Testis (tissue), 5 donors: ENCODE measurements at regions of chr3 and their contacts with region 1.

Region 1: GRCh38 chr3:17841190-17841828 is 98.9 kb upstream of the TBC1D5 start:
- DNase-seq: peak; percentile 82
- H3K4me3 ChIP-seq: no peak overlapping the region
- H3K27ac ChIP-seq: no peak overlapping the region
- H3K4me1 ChIP-seq: no peaks in the 10 kb centered on the region
- H3K27me3 ChIP-seq: no peaks in the 10 kb centered on the region
- CTCF ChIP-seq: peak; percentile 65 to 87 (median 75)
- POLR2A ChIP-seq: no peak

Region 2: DNA sequence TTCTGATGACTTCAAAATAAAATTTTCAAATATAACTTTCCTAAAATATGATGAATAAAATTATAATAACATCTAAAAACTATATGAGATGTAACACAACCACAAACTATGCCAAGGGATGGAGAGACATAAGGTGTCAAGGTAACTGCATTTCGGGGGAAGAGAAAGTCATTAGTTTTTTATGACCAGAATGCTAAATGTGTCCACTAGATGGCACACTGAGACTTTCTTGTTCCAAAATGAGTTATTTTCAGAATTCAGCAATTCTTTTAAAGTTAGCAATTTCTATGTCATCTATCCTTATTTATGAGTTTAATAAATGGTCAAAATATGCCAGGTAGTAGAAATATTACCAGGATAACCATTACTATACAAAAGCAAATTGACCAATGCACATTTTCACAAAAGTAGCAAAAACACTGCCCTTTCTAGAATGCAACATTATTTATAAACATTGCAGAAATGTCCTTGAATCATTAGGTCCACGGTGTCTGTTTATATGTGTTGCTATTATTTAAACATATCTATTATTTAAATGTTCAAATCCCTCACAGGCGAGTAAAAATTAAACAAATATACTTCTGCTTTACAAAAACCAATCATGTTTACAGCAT is 582.4 kb before region 1 on chr3:
- intact Hi-C with region 1: loop called (anchors 10 kb)
- DNase-seq: peak; percentile 23
- H3K4me3 ChIP-seq: no peak overlapping the region
- H3K27ac ChIP-seq: no peak overlapping the region
- H3K4me1 ChIP-seq: no peaks in the 10 kb centered on the region
- H3K27me3 ChIP-seq: no peaks in the 10 kb centered on the region
- CTCF ChIP-seq: peak in 2 of 3 experiments; percentile 70 to 80
- POLR2A ChIP-seq: no peak

Region 3: DNA sequence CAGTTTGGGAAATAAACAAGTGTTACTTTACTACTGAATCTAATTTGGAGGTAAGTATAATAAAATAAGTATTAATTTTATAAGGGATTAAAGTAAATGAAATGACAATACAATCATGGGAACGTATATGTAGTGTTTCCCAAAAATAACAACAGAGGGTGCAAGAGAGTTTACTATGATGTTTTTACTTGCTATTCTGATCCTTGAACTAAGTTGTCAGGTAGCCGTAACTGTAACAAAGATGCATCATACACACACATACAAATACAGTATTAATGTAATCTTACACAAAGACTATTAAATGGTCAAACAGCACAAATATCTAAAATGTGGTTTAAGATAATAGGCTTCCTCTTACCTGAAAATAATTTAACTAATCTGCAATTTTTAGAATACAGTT is 410.3 kb before region 1 on chr3:
- intact Hi-C with region 1: loop called (anchors 10 kb)
- DNase-seq: no peak
- H3K4me3 ChIP-seq: no peak overlapping the region
- H3K27ac ChIP-seq: no peak overlapping the region
- H3K4me1 ChIP-seq: peaks cover 3% of the 10 kb centered on the region
- H3K27me3 ChIP-seq: no peaks in the 10 kb centered on the region
- CTCF ChIP-seq: peak in 2 of 3 experiments; percentile 7 to 38
- POLR2A ChIP-seq: no peak

Region 4: DNA sequence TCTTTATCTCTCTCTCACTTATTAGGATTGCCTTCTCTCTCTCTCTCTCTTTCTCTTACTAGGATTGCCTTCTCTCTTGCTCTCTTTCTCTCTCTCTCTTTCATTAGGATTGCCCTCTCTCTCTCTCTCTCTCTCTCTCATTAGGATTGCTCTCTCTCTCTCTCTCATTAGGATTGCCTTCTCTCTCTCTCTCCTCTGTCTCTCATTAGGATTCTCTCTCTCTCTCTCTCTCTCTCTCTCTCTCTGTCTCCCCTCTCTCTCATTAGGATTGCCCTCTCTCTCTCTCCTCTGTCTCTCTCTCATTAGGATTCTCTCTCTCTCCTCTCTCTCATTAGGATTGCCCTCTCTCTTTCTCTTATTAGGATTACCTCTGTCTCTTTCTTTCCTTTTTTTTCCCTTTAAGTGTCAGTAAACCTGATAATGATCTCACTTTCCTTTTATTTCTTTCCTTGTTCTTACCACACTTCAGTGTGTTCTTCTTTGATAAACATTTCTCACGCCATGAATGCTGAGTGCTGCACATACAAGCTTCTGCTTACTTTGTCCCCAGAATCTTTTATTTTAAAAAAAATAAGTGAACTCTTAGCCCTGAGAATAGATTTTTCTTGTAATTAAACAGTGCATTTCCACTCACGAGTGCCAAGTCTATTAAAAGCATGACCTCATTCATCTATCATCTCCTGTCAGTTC is 144.5 kb after region 1 on chr3:
- intact Hi-C with region 1: no loop called
- DNase-seq: no peak
- H3K4me3 ChIP-seq: no peak overlapping the region
- H3K27ac ChIP-seq: no peak overlapping the region
- H3K4me1 ChIP-seq: no peaks in the 10 kb centered on the region
- H3K27me3 ChIP-seq: no peaks in the 10 kb centered on the region
- CTCF ChIP-seq: no peak
- POLR2A ChIP-seq: no peak

Region 5: GRCh38 chr3:18018491-18019160 is 177.3 kb after region 1 on chr3:
- intact Hi-C with region 1: no loop called
- DNase-seq: no peak
- H3K4me3 ChIP-seq: no peak overlapping the region
- H3K27ac ChIP-seq: no peak overlapping the region
- H3K4me1 ChIP-seq: no peaks in the 10 kb centered on the region
- H3K27me3 ChIP-seq: no peaks in the 10 kb centered on the region
- CTCF ChIP-seq: no peak
- POLR2A ChIP-seq: no peak